Left cardiac atrium (tissue), 4 donors: ENCODE measurements at regions of chr7 and their contacts with region 1.

Region 1: GRCh38 chr7:55132890-55133551 is 114.2 kb downstream of the EGFR start:
- DNase-seq: no peak
- ATAC-seq: peak in 1 of 2 donors; percentile 71

Region 2: DNA sequence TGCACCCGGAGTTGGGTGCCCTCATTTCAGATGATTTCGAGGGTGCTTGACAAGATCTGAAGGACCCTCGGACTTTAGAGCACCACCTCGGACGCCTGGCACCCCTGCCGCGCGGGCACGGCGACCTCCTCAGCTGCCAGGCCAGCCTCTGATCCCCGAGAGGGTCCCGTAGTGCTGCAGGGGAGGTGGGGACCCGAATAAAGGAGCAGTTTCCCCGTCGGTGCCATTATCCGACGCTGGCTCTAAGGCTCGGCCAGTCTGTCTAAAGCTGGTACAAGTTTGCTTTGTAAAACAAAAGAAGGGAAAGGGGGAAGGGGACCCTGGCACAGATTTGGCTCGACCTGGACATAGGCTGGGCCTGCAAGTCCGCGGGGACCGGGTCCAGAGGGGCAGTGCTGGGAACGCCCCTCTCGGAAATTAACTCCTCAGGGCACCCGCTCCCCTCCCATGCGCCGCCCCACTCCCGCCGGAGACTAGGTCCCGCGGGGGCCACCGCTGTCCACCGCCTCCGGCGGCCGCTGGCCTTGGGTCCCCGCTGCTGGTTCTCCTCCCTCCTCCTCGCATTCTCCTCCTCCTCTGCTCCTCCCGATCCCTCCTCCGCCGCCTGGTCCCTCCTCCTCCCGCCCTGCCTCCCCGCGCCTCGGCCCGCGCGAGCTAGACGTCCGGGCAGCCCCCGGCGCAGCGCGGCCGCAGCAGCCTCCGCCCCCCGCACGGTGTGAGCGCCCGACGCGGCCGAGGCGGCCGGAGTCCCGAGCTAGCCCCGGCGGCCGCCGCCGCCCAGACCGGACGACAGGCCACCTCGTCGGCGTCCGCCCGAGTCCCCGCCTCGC is 114.4 kb before region 1 on chr7 and contains the start of gene EGFR:
- intact Hi-C with region 1: loop called in 1 of 2 experiments (anchors 5 kb)
- DNase-seq: peak; percentile 83
- ATAC-seq: peak; percentile 83 to 89
- total RNA-seq, gene EGFR: 23.3 to 26.6 TPM

Region 3: DNA sequence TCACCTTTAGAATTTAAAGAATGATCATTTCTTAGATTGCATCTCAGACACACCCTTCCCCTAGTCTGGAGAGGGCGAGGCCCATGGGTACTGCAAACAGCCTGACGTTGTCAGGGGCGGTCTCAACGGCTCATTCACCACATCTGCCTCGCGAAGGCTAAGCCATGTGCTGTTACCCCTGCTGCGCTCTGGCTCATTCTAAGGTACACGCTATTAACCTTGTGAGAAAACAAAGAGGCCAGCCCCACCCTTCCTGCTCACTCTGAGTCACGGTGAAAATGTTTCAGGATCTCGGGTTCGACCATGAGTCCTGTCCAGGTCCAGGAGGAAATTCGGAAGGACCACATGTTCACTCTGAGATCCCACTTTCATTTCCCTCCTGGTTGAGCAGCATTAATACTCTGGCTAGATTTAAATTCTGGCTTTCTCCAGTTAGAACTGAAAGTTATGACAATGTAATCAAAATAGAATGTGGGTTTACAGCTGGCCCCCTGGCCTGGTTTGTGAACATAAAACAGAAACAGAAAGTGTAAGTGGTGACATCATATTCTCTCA is 59.0 kb before region 1 on chr7:
- intact Hi-C with region 1: loop called in 1 of 2 experiments (anchors 10 kb)
- DNase-seq: peak; percentile 54
- ATAC-seq: peak; percentile 39 to 71

Region 4: DNA sequence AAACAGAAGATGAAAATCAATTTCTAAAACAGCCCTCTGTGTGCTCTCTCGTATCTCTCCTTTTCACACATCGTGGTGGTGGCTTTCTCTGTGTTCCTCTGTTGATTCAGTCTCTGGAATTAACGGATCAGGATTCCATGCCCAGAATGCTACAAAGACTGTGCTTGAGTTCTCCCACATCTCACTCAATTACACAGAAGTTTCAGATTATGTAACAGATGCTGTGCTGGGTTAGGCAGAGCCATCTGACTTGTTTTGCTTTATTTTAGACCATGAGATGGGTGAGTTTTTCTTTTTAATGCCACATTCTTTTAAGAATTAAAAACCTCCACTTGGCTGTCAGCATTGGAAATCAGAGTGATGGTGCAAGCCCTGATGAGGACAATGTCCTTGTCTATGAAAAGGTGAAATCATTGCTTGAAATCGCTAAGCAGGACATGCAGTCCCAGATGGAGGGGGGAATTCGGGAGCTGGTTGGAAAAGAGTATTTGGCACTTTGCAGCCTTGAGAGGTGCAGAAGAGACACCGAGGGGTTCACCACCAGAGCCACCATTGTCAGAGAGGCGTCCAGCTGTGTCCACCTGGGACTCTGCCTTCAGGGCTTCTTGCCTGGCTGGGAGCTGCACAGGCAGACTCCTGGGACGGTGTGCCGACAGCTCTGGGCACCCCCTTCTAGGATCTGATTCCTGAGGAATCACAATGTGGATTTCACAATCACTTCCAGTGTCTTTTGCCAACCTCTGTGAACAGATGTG is 33.8 kb before region 1 on chr7:
- intact Hi-C with region 1: loop called in 1 of 2 experiments (anchors 5 kb)
- DNase-seq: no peak
- ATAC-seq: peak; percentile 32 to 41

Region 5: GRCh38 chr7:56083150-56083785 is 950.2 kb after region 1 on chr7:
- intact Hi-C with region 1: no loop called
- DNase-seq: peak; percentile 53
- ATAC-seq: peak in 1 of 2 donors; percentile 27